Activated CD4-positive, alpha-beta T cell treated with anti-CD3 and anti-CD28 coated beads for 36 hours (primary cell): ENCODE measurements at regions of chr6 and their contacts with region 1.

Region 1: GRCh38 chr6:1604158-1605030 is 5.3 kb upstream of the FOXC1 start:
- DNase-seq: peak; percentile 82
- ATAC-seq: peak; percentile 84
- H3K4me3 Mint-ChIP-seq: no peak overlapping the region
- H3K27ac Mint-ChIP-seq: no peak overlapping the region
- H3K4me1 Mint-ChIP-seq: peaks cover 30% of the 10 kb centered on the region
- H3K27me3 Mint-ChIP-seq: peaks cover 77% of the 10 kb centered on the region

Region 2: GRCh38 chr6:1575210-1576041 is 29.0 kb before region 1 on chr6:
- CTCF ChIA-PET with region 1: no interaction called
- POLR2A ChIA-PET with region 1: no interaction called
- intact Hi-C with region 1: no loop called
- DNase-seq: no peak
- ATAC-seq: no peak
- H3K4me3 Mint-ChIP-seq: no peak overlapping the region
- H3K27ac Mint-ChIP-seq: no peak overlapping the region
- H3K4me1 Mint-ChIP-seq: no peaks in the 10 kb centered on the region
- H3K27me3 Mint-ChIP-seq: peaks cover 2% of the 10 kb centered on the region

Region 3: GRCh38 chr6:1930356-1930755 is 326.0 kb after region 1 on chr6:
- CTCF ChIA-PET with region 1: no interaction called
- POLR2A ChIA-PET with region 1: no interaction called
- intact Hi-C with region 1: no loop called
- DNase-seq: no peak
- ATAC-seq: no peak
- H3K4me3 Mint-ChIP-seq: no peak overlapping the region
- H3K27ac Mint-ChIP-seq: no peak overlapping the region
- H3K4me1 Mint-ChIP-seq: no peaks in the 10 kb centered on the region
- H3K27me3 Mint-ChIP-seq: no peaks in the 10 kb centered on the region

Region 4: DNA sequence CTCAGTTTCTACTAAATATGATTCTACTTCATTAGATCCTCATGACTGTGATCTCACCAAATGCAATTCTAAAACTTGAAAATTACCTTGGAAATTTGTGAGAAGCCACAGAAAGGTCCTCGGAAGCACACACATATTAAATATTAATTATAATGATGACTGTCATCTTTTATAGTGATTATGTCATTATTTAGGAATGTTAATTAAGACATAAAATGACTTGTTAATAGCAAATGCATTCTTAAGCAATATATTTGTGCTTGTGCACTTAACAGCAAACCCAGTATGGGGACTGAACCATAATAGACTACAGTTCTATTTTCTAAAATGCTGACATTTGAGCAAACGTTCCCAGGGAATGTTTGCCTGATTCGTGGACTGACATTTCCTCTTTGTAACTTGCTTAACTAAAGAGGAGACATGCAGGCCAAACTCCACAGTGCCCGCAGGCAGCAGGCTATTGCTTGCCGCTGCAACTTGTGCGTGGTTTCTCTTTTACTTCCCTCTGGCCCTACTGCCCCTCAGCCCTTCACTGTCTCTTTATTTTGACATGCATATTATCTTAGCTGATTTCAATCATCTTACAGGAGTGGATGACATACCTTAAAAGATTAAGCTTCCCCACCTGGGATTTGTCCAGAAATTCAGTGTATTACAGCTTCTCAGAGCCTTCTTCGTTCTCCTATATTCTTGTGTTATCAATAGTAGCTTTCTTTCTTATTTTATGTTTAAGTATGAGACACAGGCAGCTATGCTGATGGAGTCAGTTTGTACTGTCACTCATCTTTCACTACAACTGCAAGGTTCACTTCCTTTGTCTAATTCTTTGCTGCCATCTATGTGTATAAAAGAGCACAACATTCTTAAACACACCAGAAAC is 499.5 kb after region 1 on chr6:
- CTCF ChIA-PET with region 1: interaction called, 5 read pairs
- POLR2A ChIA-PET with region 1: no interaction called
- intact Hi-C with region 1: loop called (anchors 1 to 2 kb)
- DNase-seq: no peak
- ATAC-seq: peak; percentile 63
- H3K4me3 Mint-ChIP-seq: no peak overlapping the region
- H3K27ac Mint-ChIP-seq: no peak overlapping the region
- H3K4me1 Mint-ChIP-seq: no peaks in the 10 kb centered on the region
- H3K27me3 Mint-ChIP-seq: no peaks in the 10 kb centered on the region

Region 5: DNA sequence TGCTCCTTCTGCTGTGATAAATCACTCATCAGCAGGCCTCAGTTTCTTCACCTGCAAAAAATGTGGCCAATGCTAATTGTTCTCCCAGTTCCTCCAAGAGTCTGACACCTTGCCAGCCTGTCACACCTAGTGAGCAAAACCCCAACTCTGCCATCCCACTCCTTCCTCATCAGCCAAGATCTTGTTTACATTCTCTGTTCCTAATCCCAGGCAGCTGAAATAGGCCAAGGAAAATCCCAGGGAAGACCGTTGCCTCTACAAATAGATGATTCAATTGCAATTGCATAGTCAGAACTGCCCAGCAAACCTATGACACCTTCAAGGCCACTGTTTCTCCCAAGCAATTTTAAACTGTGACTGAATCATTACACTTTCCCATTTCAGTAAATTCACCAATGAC is 562.3 kb after region 1 on chr6:
- CTCF ChIA-PET with region 1: no interaction called
- POLR2A ChIA-PET with region 1: no interaction called
- intact Hi-C with region 1: no loop called
- DNase-seq: no peak
- ATAC-seq: no peak
- H3K4me3 Mint-ChIP-seq: no peak overlapping the region
- H3K27ac Mint-ChIP-seq: no peak overlapping the region
- H3K4me1 Mint-ChIP-seq: peaks cover 24% of the 10 kb centered on the region
- H3K27me3 Mint-ChIP-seq: no peaks in the 10 kb centered on the region

Region 6: GRCh38 chr6:2196079-2196679 is 591.8 kb after region 1 on chr6:
- CTCF ChIA-PET with region 1: no interaction called
- POLR2A ChIA-PET with region 1: no interaction called
- intact Hi-C with region 1: loop called (anchors 1 kb)
- DNase-seq: peak; percentile 34
- ATAC-seq: peak; percentile 76
- H3K4me3 Mint-ChIP-seq: no peak overlapping the region
- H3K27ac Mint-ChIP-seq: no peak overlapping the region
- H3K4me1 Mint-ChIP-seq: no peaks in the 10 kb centered on the region
- H3K27me3 Mint-ChIP-seq: peaks cover 2% of the 10 kb centered on the region

Region 7: DNA sequence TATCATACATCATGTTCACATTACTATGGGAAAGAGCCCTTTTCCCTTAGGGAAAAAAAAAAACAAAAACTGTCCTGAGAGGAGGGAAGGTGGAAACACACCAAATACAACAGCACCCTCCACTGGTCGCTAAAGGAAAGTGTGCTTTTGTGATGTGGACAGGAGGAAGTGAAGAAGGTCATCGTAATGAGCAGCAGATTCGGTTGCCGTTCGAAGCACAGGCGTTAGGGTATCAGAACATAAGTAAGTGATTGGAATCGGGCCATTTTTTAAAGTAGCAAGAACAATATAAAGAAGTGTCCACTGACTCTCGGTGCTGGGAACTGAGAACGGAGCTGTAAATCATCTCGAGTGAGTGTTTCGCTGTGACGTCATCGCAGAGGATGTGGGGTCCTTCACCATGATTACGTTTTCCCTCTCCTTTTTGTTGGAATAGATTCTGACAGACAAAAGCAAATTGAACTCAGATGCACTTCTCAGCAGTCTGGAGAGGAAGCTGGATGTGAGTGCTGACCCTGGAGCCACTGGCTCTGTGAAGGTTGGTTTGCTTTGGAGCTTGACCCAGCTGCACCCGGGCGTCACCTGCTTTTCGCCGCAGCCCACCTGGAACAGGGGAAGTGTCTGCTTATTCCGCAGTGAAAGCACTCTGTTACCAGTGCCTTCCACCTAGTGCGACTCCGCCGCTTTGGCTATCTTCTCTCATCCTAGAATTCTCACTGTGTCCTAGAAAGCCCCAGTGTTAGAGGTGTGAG is 844.6 kb after region 1 on chr6:
- CTCF ChIA-PET with region 1: no interaction called
- POLR2A ChIA-PET with region 1: no interaction called
- intact Hi-C with region 1: loop called (anchors 1 to 5 kb)
- DNase-seq: peak; percentile 41
- ATAC-seq: peak; percentile 23
- H3K4me3 Mint-ChIP-seq: peak overlapping the region; percentile 24
- H3K27ac Mint-ChIP-seq: no peak overlapping the region
- H3K4me1 Mint-ChIP-seq: peaks cover 3% of the 10 kb centered on the region
- H3K27me3 Mint-ChIP-seq: peaks cover 5% of the 10 kb centered on the region